Psoas muscle (tissue), 8 donors: ENCODE measurements at regions of chr1 and their contacts with region 1.

Region 1: DNA sequence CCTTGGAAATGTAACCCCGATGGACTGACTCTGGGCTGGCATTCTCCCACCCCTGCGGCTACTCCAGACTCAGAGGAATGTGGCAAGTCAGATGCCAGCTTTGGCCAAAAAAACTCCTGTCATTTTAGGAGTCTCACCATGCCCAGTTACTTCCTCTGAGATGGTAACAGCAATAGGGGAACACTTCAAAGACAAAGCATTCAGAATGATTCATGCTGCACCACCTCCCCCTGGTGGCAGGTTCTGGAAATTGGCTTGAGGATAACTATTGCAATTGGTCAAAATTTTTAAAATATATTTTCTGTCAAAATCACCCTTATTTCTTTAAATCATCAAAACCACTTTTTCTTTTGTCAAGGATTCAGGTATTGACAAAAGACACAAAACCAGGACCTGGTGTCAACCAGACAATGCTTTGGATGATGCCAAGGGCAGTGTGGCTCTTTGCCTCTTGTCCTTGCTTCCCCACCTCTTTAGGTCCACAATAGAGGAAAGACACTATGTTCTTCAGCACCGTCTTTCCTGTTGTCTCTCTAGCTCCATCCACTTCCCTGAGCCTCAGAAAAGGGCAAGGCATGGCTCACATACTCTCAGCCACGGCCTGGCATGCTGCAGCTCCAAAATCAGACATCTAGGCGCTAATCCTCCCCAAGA is 9.9 kb upstream of the CDCA8 start:
- DNase-seq: peak; percentile 58 to 76
- ATAC-seq: peak; percentile 64 to 87 (median 76)
- H3K4me3 ChIP-seq: no peak overlapping the region
- H3K27ac ChIP-seq: no peak overlapping the region
- H3K4me1 ChIP-seq: peaks cover 3% of the 10 kb centered on the region
- H3K27me3 ChIP-seq: no peaks in the 10 kb centered on the region
- CTCF ChIP-seq: peak; percentile 87

Region 2: GRCh38 chr1:37458528-37458927 is 223.9 kb before region 1 on chr1:
- intact Hi-C with region 1: loop called (anchors 2 to 5 kb)
- DNase-seq: no peak
- ATAC-seq: no peak
- H3K4me3 ChIP-seq: no peak overlapping the region
- H3K27ac ChIP-seq: no peak overlapping the region
- H3K4me1 ChIP-seq: no peaks in the 10 kb centered on the region
- H3K27me3 ChIP-seq: no peaks in the 10 kb centered on the region
- CTCF ChIP-seq: no peak

Region 3: GRCh38 chr1:37602750-37603694 is 79.4 kb before region 1 on chr1:
- intact Hi-C with region 1: loop called (anchors 1 to 5 kb)
- DNase-seq: no peak
- ATAC-seq: peak in 1 of 4 donors; percentile 60
- H3K4me3 ChIP-seq: no peak overlapping the region
- H3K27ac ChIP-seq: no peak overlapping the region
- H3K4me1 ChIP-seq: no peaks in the 10 kb centered on the region
- H3K27me3 ChIP-seq: peaks cover 0 to 10% (median 2%) of the 10 kb centered on the region in 3 donors
- CTCF ChIP-seq: peak; percentile 54

Region 4: GRCh38 chr1:37719572-37720195 is 37.2 kb after region 1 on chr1:
- intact Hi-C with region 1: no loop called
- DNase-seq: no peak
- ATAC-seq: no peak
- H3K4me3 ChIP-seq: no peak overlapping the region
- H3K27ac ChIP-seq: no peak overlapping the region
- H3K4me1 ChIP-seq: no peaks in the 10 kb centered on the region
- H3K27me3 ChIP-seq: peaks cover 0 to 13% (median 2%) of the 10 kb centered on the region in 3 donors
- CTCF ChIP-seq: no peak